Calu3 (cell line): ENCODE measurements at regions of chr12 and their contacts with region 1.

Region 1: DNA sequence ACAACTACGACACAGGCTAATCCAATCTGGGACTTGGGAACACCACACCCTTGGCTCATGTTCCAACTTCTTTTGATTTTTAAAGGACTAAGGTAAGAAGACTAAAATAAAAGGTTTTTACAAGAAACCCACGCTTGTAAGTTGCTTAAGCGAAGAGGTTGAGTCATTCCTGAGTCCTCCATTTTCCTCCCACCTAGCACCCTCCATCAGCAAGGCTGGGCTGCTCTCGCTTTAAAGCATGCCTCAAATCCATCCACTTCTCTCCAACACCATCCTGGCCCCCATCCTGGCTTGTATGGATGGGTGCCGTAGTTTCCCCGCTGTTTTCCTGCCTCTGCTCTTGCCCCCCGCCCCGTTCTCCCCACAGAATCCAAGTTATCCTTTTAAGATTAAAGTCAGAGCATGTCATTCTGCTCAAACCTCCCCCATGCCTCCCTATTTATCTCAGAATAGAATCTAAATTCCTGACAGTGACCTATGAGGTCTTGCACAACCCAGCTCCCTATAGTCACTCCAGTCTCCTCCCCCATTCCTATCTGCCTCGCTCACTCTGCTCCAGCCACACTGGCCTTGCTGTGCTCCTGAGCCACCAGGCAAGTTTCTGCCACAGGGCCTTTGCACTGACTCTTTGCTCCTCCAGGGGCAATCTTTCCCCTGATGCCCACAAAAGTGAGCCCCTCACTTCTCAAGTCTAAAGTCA is 34.5 kb downstream of the SCARB1 start:
- DNase-seq: peak; percentile 60
- H3K4me3 Mint-ChIP-seq: peak overlapping the region; percentile 12
- H3K27ac Mint-ChIP-seq: peak overlapping the region; percentile 22
- H3K4me1 Mint-ChIP-seq: peaks cover 27% of the 10 kb centered on the region
- H3K27me3 Mint-ChIP-seq: no peaks in the 10 kb centered on the region
- CTCF ChIP-seq: no peak

Region 2: GRCh38 chr12:124311292-124312109 is 517.7 kb before region 1 on chr12:
- CTCF ChIA-PET with region 1: no interaction called
- intact Hi-C with region 1: no loop called
- DNase-seq: peak; percentile 29
- H3K4me3 Mint-ChIP-seq: no peak overlapping the region
- H3K27ac Mint-ChIP-seq: no peak overlapping the region
- H3K4me1 Mint-ChIP-seq: no peaks in the 10 kb centered on the region
- H3K27me3 Mint-ChIP-seq: peaks cover 74% of the 10 kb centered on the region
- CTCF ChIP-seq: no peak

Region 3: DNA sequence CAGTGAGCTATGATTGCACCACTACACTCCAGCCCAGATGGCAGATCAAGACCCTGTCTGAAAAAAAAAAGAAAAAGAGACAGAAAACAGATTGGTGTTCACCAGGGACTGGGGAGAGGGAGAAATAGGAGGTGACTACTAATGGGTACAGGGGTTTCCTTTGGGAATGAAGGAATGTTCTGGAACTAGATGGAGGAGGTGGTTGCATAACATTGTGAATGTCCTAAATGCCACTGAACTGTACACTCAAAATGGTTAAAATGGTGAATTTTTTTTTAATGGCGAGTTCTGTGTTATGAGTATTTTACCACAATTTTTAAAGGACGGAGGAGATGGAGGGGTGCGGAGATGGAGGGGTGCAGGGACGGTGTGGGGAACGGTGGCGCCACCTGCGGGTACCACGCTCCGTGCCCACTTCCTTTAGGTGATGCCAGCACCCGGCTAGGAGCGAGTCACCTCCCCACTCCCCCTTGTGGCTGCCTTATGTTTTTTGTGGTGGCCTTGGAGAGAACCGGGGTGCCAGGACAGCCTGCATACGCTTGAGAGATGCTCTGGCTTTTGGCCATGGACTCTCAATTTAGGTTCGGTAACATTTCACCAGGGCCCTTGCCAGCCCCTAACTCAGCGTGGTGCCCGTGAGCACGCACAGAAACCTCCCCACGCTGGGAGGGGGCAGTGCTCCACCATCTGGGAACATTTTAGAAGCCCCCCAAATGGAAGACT is 69.2 kb after region 1 on chr12:
- CTCF ChIA-PET with region 1: interaction called, 4 read pairs
- intact Hi-C with region 1: loop called (anchors 2 kb)
- DNase-seq: peak; percentile 82
- H3K4me3 Mint-ChIP-seq: no peak overlapping the region
- H3K27ac Mint-ChIP-seq: no peak overlapping the region
- H3K4me1 Mint-ChIP-seq: peaks cover 31% of the 10 kb centered on the region
- H3K27me3 Mint-ChIP-seq: no peaks in the 10 kb centered on the region
- CTCF ChIP-seq: peak; percentile 74